ENCODE measurements at regions of chr1 and their contacts with region 1.

Region 1: DNA sequence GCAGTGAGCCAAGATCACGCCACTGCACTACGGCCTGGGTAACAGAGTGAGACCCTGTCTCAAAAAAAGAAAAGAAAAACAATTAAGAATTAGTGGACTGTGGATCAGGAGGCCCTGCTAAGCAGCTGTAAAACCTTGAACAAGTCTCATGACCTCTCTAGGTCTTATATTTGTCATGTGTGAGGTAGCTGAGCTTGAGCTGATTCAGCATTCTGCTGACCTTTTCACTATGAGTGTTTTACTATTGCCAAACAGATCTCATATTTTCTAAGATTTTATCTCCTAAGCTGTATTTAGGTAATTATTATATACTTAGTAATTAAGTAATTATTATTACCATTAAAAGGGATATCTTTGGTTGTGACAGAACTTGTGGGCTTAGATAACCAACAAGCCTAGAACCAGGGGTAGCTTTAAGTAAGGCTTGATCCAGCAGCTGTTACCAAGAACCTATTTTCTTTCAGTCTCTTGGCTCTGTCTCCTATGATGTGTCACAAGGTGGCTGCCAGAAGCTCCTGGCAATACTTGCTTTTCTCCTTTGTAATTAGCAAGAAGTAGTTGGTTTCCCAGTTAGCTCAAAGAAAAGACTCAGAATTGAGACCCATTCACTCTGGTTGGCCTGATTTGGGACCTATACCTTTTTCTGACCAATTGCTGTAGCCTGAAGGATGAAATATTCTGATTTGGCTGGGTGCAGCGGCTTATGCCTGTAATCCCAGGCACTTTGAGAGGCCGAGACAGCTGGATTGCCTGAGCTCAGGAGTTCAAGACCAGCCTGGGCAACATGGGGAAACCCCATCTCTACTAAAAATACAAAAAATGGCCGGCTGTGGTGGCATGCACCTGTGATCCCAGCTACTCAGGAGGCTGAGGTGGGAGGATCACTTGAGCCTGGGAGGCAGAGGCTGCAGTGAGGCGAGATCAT is 8.5 kb upstream of the ZC3H12A start:
- DNase-seq: no peak
- H3K4me3 Mint-ChIP-seq: no peak overlapping the region
- H3K27ac Mint-ChIP-seq: no peak overlapping the region
- H3K4me1 Mint-ChIP-seq: peaks cover 7% of the 10 kb centered on the region
- H3K27me3 Mint-ChIP-seq: no peaks in the 10 kb centered on the region

Region 2: DNA sequence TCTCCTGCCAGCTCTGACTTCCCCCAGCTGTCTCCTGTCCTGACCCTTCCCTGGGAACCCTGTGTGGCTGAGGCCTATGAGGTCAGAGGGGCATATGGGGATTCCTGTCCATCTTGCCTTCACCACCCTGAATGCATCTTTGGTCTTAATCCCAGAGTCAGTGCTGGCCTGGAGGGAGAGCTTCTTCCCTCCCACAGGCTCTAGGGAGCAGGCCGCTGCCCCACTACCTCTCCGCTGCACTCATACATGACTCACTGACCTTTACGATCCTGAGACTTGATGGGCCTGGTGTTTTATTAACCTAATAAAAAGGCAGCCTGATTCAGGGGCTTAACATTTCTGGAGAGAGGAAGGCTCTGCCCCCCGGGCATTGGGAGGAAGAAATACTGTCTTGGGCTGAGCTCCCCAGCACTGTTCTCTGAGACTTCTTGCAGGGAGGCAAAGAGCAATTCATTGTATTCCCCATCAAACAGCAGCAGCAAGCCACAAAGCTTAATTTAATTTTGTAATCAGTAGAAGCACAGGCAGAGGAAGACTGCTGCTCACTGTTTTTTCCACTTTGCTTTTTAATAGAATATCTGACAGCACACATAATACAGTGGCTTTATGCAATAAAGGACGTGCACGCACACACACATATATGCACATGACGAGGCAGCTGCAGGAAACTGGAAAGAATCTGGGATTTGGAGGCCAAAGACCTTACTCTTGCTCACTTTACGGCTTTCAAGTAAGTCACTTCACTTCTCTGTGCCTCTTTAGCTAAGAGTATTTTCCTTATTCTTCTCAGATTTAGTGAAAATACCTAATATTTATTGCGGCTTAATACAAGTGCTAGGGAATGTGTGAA is 342.4 kb before region 1 on chr1:
- CTCF ChIA-PET with region 1: no interaction called
- intact Hi-C with region 1: no loop called
- DNase-seq: no peak
- H3K4me3 Mint-ChIP-seq: no peak overlapping the region
- H3K27ac Mint-ChIP-seq: no peak overlapping the region
- H3K4me1 Mint-ChIP-seq: no peaks in the 10 kb centered on the region
- H3K27me3 Mint-ChIP-seq: no peaks in the 10 kb centered on the region

Region 3: GRCh38 chr1:37455516-37455915 is 10.3 kb before region 1 on chr1:
- CTCF ChIA-PET with region 1: interaction called, 26 read pairs
- intact Hi-C with region 1: no loop called
- DNase-seq: no peak
- H3K4me3 Mint-ChIP-seq: no peak overlapping the region
- H3K27ac Mint-ChIP-seq: no peak overlapping the region
- H3K4me1 Mint-ChIP-seq: peaks cover 5% of the 10 kb centered on the region
- H3K27me3 Mint-ChIP-seq: no peaks in the 10 kb centered on the region

Region 4: DNA sequence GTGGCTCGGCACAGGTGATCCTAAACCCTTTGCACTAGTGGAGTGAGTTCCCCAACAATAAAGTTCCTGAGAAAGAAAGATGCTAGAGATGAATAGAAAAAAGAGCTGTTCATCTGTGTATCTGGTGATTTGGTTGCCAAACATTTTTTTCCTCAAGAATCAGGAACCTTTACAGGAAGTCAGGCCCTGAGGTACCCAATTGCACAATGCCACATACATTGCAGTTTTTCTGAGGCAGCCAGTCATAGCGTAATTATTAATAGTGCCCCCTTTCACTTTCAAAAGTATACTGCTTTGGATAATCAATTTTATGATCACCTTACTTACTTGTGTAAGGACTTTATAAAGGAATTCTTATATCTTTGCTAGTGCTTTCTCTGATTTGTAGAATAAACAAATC is 927.0 kb after region 1 on chr1:
- CTCF ChIA-PET with region 1: no interaction called
- intact Hi-C with region 1: no loop called
- DNase-seq: no peak
- H3K4me3 Mint-ChIP-seq: no peak overlapping the region
- H3K27ac Mint-ChIP-seq: no peak overlapping the region
- H3K4me1 Mint-ChIP-seq: no peaks in the 10 kb centered on the region
- H3K27me3 Mint-ChIP-seq: peaks cover 32% of the 10 kb centered on the region